Endothelial cell of umbilical vein (primary cell): ENCODE measurements at regions of chr5 and their contacts with region 1.

Region 1: GRCh38 chr5:113330533-113331208 is 104.1 kb downstream of the TSSK1B start:
- DNase-seq: peak; percentile 75
- H3K4me3 ChIP-seq: no peak overlapping the region
- H3K27ac ChIP-seq: no peak overlapping the region
- H3K4me1 ChIP-seq: peaks cover 9% of the 10 kb centered on the region
- H3K27me3 ChIP-seq: no peaks in the 10 kb centered on the region
- CTCF ChIP-seq: peak; percentile 20 to 30
- POLR2A ChIP-seq: no peak

Region 2: DNA sequence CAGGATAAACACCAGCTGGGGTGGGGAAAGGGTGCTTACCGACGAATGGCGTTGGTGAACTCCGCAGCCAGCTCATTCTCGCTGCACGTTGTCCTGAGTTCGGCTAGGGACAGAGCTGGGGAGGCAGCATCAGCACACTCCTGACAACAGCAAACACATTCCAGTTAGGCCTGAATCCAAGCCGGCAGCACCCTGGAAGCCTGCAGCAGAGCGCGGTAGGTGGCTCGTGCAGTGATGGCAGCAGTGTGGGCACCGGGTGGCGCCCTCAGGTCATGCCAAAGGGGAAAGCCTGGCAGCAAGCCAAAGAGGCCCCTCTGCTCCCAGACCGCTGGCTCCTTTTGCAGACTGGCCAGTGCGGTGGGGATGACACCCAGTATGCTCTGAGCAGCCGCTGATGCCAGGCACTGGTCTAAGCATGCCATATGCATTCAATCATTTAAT is 287.2 kb before region 1 on chr5:
- CTCF ChIA-PET with region 1: interaction called, 5 read pairs
- POLR2A ChIA-PET with region 1: no interaction called
- dilution Hi-C with region 1: no loop called
- intact Hi-C with region 1: loop called (anchors 1 kb)
- DNase-seq: peak; percentile 17
- H3K4me3 ChIP-seq: no peak overlapping the region
- H3K27ac ChIP-seq: no peak overlapping the region
- H3K4me1 ChIP-seq: peaks cover 4% of the 10 kb centered on the region
- H3K27me3 ChIP-seq: no peaks in the 10 kb centered on the region
- CTCF ChIP-seq: peak; percentile 19 to 20
- POLR2A ChIP-seq: no peak

Region 3: GRCh38 chr5:113123618-113124017 is 207.1 kb before region 1 on chr5:
- CTCF ChIA-PET with region 1: interaction called, 8 read pairs
- POLR2A ChIA-PET with region 1: no interaction called
- dilution Hi-C with region 1: no loop called
- intact Hi-C with region 1: loop called (anchors 1 kb)
- DNase-seq: peak; percentile 22
- H3K4me3 ChIP-seq: no peak overlapping the region
- H3K27ac ChIP-seq: no peak overlapping the region
- H3K4me1 ChIP-seq: no peaks in the 10 kb centered on the region
- H3K27me3 ChIP-seq: no peaks in the 10 kb centered on the region
- CTCF ChIP-seq: peak; percentile 25 to 28
- POLR2A ChIP-seq: no peak